Sigmoid colon (tissue), 7 donors: ENCODE measurements at regions of chr2 and their contacts with region 1.

Region 1: GRCh38 chr2:20962939-20963557 is 80.8 kb downstream of the APOB start:
- DNase-seq: peak; percentile 78
- H3K4me3 ChIP-seq: no peak overlapping the region
- H3K27ac ChIP-seq: peak overlapping the region in 2 of 4 donors; percentile 70 to 72
- H3K4me1 ChIP-seq: peaks cover 0 to 25% (median 18%) of the 10 kb centered on the region in 4 donors
- H3K27me3 ChIP-seq: no peaks in the 10 kb centered on the region
- CTCF ChIP-seq: peak; percentile 54 to 92 (median 84)
- EP300 ChIP-seq: no peak
- POLR2A ChIP-seq: no peak

Region 2: DNA sequence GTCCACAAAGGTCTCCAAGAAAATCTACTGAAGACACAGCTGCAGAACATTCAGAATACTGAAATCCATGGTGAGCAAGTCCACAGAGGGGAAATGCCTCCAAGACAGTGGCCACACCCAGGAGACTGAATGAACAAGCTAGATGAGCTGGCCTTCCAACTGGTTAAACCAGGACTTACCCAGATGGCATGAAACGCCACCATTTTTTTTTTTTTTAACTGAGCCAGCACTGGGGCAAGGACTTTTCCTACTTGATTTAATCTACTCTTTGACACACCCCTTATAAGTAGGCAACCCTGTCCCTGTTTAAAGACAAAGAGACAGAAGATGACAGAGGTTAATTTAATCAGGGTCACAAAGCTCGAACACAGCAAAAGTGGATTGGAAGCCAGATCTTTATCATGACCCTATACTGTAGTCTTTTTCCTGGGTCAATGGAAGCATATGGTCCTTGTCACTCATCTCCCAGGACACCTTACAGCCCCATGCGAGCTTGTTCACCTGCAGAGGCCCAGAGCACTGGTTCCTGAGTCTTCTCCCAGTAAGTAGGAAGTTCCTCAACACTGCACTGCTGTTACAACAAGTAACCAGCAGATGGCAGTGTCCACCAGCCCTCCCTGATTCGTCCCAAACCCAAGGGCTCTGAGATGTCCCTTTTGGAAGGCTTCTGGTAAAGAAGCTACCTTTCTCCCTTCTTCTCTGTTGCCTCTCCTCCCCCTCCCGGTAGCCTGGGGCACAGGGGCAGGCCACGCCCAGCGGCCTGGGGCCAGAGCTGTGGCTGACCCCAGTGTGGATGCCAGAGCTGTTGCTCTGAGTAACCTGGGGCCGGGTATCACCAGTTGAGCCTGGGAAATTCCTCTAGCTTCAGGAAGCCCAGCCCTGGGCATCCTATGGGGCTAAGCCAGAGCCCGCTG is 301.7 kb before region 1 on chr2:
- intact Hi-C with region 1: loop called (anchors 1 kb)
- DNase-seq: peak; percentile 85
- H3K4me3 ChIP-seq: no peak overlapping the region
- H3K27ac ChIP-seq: no peak overlapping the region
- H3K4me1 ChIP-seq: peaks cover 0 to 25% (median 18%) of the 10 kb centered on the region in 4 donors
- H3K27me3 ChIP-seq: peaks cover 19 to 51% (median 21%) of the 10 kb centered on the region in 3 donors
- CTCF ChIP-seq: peak; percentile 90 to 97 (median 92)
- EP300 ChIP-seq: no peak
- POLR2A ChIP-seq: no peak

Region 3: DNA sequence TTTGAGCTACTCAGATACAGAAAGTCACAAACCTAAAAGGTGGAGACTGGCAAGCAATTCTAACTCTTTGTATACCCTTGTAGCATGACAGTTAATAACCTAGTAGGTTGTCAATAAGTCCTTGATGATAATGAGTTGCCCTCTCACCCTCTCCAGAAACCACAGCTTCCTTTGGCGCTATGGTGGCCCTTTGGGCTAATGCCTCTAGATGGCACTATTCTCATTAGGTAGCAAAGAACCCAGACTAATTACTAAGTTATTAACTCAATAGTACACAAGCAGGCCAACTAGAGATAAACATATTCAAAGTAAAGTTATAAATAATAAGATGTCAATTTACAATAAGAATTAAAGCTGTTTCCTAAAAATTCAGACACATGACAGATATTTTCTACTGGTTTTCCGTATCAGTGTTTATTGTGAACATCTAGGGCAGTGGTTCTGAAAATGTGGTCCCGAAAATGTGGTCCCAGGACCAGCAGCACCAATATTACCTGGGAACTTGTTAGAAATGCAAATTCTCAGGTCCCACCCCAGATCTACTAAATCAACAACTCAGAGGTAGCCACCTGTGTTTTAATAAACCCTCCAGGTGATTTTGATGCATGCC is 181.3 kb before region 1 on chr2:
- intact Hi-C with region 1: loop called (anchors 5 kb)
- DNase-seq: no peak
- H3K4me3 ChIP-seq: no peak overlapping the region
- H3K27ac ChIP-seq: no peak overlapping the region
- H3K4me1 ChIP-seq: no peaks in the 10 kb centered on the region
- H3K27me3 ChIP-seq: no peaks in the 10 kb centered on the region
- CTCF ChIP-seq: peak in 3 of 4 experiments; percentile 18 to 57 (median 31)
- EP300 ChIP-seq: no peak
- POLR2A ChIP-seq: no peak

Region 4: GRCh38 chr2:20822535-20823490 is 140.2 kb before region 1 on chr2 and contains the start of gene LDAH:
- intact Hi-C with region 1: loop called (anchors 2 kb)
- DNase-seq: peak; percentile 96
- H3K4me3 ChIP-seq: peak within 1 kb of the TSS; percentile 70 to 90 (median 82)
- H3K27ac ChIP-seq: peak within 1 kb of the TSS; percentile 88 to 95 (median 93)
- H3K4me1 ChIP-seq: peaks cover 0 to 8% (median 6%) of the 10 kb centered on the region in 4 donors
- H3K27me3 ChIP-seq: no peaks in the 10 kb centered on the region
- CTCF ChIP-seq: no peak
- EP300 ChIP-seq: peak in 2 of 4 donors; percentile 71 to 89
- POLR2A ChIP-seq: peak in 1 of 2 donors; percentile 35
- total RNA-seq, gene LDAH: 7.6 to 18.3 (median 12.4) TPM

Region 5: GRCh38 chr2:21070341-21071257 is 107.6 kb after region 1 on chr2:
- intact Hi-C with region 1: no loop called
- DNase-seq: no peak
- H3K4me3 ChIP-seq: no peak overlapping the region
- H3K27ac ChIP-seq: no peak overlapping the region
- H3K4me1 ChIP-seq: no peaks in the 10 kb centered on the region
- H3K27me3 ChIP-seq: no peaks in the 10 kb centered on the region
- CTCF ChIP-seq: no peak
- EP300 ChIP-seq: no peak
- POLR2A ChIP-seq: no peak